ENCODE measurements at regions of chr7 and their contacts with region 1.

Region 1: GRCh38 chr7:116984917-116985316 is 31.6 kb downstream of the ST7 start:
- DNase-seq: peak; percentile 49
- H3K4me3 Mint-ChIP-seq: no peak overlapping the region
- H3K27ac Mint-ChIP-seq: no peak overlapping the region
- H3K4me1 Mint-ChIP-seq: peaks cover 5% of the 10 kb centered on the region
- H3K27me3 Mint-ChIP-seq: no peaks in the 10 kb centered on the region
- CTCF ChIP-seq: peak; percentile 62

Region 2: GRCh38 chr7:116970238-116970910 is 14.5 kb before region 1 on chr7:
- CTCF ChIA-PET with region 1: interaction called, 42 read pairs
- POLR2A ChIA-PET with region 1: no interaction called
- intact Hi-C with region 1: no loop called
- DNase-seq: no peak
- H3K4me3 Mint-ChIP-seq: no peak overlapping the region
- H3K27ac Mint-ChIP-seq: no peak overlapping the region
- H3K4me1 Mint-ChIP-seq: peaks cover 5% of the 10 kb centered on the region
- H3K27me3 Mint-ChIP-seq: no peaks in the 10 kb centered on the region
- CTCF ChIP-seq: no peak

Region 3: DNA sequence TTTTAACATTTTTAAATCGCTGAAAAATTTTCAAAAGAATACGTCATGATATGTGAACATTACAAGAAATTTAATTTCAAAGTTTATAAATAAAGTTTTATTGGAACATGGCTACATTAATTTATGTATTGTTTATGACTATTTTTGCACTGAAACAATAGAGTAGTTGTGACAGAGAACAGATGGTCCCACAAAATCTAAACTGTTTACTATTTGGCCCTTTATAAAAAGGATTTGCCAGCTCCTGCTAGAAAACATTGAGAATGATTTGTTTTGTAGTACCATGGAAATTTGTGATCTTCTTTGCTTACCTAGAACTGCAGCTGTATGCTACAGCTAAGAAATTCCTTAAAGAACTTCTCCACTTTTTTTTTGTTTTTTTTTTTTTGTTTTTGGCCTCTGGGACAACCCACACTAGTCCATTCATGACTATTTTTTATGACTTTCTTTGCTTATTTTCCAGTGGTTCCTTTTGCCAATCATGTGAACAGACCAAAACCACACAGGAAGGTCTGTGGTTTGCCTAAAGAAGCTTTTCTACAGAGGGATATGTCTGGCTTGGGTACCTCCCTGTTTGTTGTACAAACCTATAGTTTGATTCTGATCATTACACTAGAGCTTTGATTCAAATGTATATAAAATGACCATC is 24.1 kb after region 1 on chr7:
- CTCF ChIA-PET with region 1: interaction called, 29 read pairs
- POLR2A ChIA-PET with region 1: no interaction called
- intact Hi-C with region 1: loop called (anchors 1 kb)
- DNase-seq: peak; percentile 14
- H3K4me3 Mint-ChIP-seq: no peak overlapping the region
- H3K27ac Mint-ChIP-seq: no peak overlapping the region
- H3K4me1 Mint-ChIP-seq: peaks cover 13% of the 10 kb centered on the region
- H3K27me3 Mint-ChIP-seq: no peaks in the 10 kb centered on the region
- CTCF ChIP-seq: no peak

Region 4: DNA sequence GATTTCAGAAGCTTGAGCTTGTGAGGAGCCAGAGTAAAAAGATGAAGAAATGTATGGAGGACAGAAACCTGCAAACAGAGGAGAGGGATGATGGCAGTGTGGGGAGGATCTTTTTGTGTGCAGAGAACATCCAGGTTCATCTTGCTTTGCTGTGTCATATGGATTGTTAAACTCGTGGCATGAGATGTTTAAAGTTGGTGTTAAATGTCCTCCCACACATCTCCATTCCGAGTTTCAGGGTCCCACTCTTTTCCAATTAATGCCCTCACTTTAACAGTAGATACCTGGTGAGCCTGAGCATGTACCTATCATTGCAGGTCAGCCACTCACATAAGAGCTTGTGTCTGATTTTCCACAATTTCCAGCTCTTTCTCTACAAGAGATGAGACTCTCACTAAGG is 116.1 kb after region 1 on chr7:
- CTCF ChIA-PET with region 1: interaction called, 12 read pairs
- POLR2A ChIA-PET with region 1: no interaction called
- intact Hi-C with region 1: no loop called
- DNase-seq: no peak
- H3K4me3 Mint-ChIP-seq: no peak overlapping the region
- H3K27ac Mint-ChIP-seq: no peak overlapping the region
- H3K4me1 Mint-ChIP-seq: peaks cover 9% of the 10 kb centered on the region
- H3K27me3 Mint-ChIP-seq: no peaks in the 10 kb centered on the region
- CTCF ChIP-seq: no peak

Region 5: DNA sequence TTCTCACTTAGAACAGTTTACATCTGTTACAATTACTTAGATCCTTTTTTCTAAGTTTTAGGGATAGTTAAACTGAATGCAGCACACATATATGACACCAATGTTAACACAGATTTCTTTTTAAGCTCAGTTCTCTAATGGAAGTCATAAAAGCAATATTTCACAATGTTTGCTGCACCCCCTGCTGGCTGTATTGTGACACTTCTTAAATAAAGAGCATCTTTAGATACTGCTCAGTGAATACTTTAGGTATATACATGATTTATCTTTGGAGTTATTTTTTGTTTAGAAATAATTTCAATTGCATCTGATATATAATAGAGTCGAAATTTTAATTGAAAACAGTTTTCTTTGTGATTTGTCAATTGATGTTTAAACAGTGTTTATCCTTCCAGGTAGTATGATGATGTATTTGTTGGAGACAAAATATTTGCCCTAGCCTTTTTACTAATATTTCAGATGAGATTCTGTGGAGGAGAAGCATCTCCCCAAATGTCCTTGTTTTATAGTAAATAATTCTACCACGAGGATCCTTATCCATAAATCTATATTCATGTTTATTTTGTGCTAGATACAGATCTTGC is 142.8 kb after region 1 on chr7:
- CTCF ChIA-PET with region 1: interaction called, 278 read pairs
- POLR2A ChIA-PET with region 1: interaction called, 4 read pairs
- intact Hi-C with region 1: no loop called
- DNase-seq: peak; percentile 73
- H3K4me3 Mint-ChIP-seq: no peak overlapping the region
- H3K27ac Mint-ChIP-seq: no peak overlapping the region
- H3K4me1 Mint-ChIP-seq: peaks cover 18% of the 10 kb centered on the region
- H3K27me3 Mint-ChIP-seq: no peaks in the 10 kb centered on the region
- CTCF ChIP-seq: peak; percentile 72